Left cardiac atrium (tissue), 4 donors: ENCODE measurements at regions of chr16 and their contacts with region 1.

Region 1: GRCh38 chr16:83967806-83968305 is at the start of gene NECAB2:
- DNase-seq: peak; percentile 70
- ATAC-seq: peak; percentile 76
- total RNA-seq, gene NECAB2: 0.91 TPM in 1 of 2 donors, not detected in the other

Region 2: DNA sequence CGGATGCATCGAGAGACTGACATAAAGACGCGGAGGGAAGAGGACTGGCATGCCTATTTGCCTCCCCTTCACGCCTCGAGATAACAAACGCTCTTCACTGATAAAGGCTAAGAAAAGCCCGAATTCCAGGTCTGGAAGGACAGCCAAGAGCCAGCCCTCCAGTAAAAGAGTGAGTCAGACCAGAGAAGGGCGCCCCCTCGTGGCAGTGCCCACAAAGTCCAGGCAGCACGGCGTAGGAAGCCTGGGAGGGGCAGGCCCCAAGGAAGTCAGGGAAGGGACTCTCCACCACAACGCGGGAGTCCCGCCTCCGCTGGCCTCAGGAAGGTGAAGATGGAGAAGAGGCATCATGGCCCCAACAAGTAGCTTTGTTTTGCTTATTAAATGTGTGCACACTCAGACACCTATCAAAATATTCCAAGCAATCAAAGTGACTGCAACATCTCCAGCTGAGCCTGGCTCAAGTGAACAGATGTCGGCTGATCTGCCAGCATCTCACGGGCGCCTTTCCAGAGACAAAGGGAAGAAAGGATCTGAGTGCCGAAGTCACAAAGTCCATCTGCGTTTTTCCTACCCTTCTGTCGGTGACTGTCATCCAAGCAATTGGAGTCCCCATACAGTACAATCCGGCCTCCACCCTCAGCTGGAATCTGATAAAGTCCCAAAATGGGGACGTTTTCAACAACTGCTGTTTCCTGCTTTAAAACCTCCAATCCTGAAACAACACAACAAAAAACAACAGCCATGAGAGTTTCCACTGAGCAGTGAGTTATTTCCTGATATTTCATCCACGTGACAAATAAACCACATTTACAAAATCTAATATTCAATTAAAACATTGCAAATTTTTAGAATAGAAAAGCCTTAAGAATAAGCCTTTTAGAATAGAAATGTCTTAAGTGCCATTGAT is 95.1 kb after region 1 on chr16:
- intact Hi-C with region 1: loop called in 1 of 2 experiments (anchors 5 kb)
- DNase-seq: peak; percentile 85
- ATAC-seq: peak; percentile 92

Region 3: GRCh38 chr16:84175350-84176081 is 207.7 kb after region 1 on chr16:
- intact Hi-C with region 1: loop called (anchors 5 to 10 kb)
- DNase-seq: peak; percentile 69
- ATAC-seq: peak; percentile 75 to 76

Region 4: DNA sequence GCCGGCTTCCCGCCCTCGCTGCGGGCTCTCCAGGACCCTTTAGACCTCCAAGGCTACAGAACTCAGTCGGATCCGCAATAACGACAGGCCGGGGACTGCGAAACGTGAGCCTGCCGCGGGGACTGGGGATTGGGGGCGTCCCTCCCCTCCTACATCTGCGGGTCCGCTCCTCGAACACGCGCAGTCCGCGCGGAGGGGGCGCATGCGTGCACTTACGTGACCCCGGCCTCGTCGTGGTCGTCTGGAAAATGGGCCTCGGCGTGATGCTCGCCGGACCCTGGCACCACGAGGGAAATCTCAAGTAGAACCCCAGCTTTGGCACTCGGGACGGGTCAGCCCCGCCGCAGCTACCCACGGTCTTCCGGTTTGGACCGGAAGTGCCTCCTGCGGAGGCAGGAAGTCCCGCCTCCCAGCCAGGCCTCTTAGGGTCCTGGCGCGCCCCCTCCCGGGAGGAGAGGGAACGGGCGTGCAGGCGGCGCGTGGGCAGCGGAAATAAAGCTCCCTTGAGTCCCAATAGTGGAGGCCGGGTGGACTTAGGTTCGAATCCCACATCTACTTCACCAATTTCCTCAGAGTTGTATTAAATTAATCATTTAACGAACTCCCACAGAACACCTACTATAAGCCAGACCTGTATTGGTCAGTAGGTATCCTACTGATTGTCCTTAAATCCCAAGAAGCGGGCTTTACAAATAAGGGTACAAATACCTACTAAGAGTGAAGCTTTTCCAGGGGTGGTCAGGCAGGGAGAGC is 219.0 kb after region 1 on chr16 and contains the start of gene TAF1C:
- intact Hi-C with region 1: loop called in 1 of 2 experiments (anchors 10 kb)
- DNase-seq: peak; percentile 94
- ATAC-seq: peak; percentile 97 to 98
- total RNA-seq, gene TAF1C: 27.9 to 33.6 TPM